ENCODE measurements at regions of chr2 and their contacts with region 1.

Region 1: DNA sequence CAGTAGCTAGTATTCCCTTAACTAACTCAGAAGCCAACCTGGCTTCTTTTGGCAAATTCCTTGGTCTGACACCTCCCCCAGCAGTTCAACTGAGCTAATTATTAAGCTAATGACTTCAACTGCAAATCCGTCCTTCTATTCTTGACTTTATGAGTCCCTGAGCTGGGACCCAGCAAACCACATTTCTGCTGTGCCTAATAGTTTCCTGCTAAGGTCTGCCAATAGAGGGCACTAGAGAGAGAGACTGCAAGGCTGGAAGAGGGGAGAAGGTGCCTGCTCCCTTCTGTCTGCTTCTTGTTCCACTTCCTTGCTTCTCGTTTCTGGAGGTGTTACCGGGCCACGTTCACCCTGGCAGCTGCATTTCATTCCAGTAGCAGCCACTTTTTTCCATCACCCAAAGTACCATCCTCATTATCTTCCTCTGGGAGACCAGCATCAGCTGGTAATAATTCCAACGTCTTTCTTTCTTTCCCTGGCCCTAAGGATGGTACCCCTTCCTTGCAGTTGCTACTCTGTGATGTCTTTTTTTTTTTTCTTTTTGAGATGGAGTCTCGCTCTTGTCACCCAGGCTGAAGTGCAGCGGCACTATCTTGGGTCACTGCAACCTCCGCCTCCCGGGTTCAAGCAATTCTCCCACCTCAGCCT is 352.0 kb downstream of the TNS1 start:
- DNase-seq: no peak
- H3K4me3 ChIP-seq: no peak overlapping the region
- H3K27ac ChIP-seq: peak overlapping the region; percentile 36 to 82
- H3K4me1 ChIP-seq: peaks cover 0 to 41% (median 14%) of the 10 kb centered on the region in 4 donors
- H3K27me3 ChIP-seq: no peaks in the 10 kb centered on the region
- CTCF ChIP-seq: peak; percentile 71 to 77

Region 2: DNA sequence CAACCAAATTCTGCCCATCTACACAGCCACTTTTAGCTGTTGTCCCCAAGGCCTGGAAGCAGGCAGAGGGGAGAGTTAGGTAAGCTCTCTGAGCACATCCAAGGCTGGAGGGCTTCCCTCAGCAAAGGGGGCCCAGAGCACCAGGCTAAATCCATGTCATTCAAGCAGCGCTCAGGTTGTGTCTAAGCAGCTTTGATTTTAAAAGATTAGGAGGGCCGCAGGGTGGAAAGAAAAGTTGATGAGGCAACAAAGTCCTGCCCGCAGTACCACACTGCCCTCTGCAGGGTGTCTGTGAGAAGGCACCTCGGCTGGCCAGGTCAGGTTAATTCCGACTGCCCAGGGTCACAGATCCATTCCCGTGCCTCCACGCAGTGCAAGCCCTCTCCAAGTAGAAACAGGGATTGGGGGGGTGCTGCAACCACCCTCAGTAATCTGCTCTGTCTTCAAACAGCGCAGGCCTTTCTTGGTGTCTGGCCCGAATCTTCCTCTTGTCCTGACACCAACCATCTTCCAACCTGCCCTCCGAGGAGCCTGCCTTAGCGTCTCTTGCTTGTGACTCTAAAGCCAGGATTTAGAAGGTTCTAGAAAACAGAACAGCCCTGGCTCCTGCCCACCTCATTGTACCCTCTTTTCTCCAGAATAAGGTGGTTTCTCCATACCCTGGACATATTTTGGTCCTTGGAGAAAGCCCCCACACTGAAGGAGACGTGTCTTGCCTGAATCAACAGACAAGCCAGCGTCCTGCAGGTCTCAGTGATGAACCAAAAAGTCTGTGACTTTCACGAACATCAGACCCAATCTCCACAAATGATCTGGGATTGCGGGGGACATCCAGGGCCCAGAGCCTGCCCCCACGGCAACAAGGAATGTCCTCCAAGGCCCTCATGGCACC is 62.8 kb after region 1 on chr2:
- intact Hi-C with region 1: loop called (anchors 5 kb)
- DNase-seq: peak; percentile 77 to 90
- H3K4me3 ChIP-seq: no peak overlapping the region
- H3K27ac ChIP-seq: peak overlapping the region; percentile 49 to 59
- H3K4me1 ChIP-seq: peaks cover 0 to 34% (median 23%) of the 10 kb centered on the region in 4 donors
- H3K27me3 ChIP-seq: no peaks in the 10 kb centered on the region
- CTCF ChIP-seq: peak; percentile 97